GM12878 (cell line): ENCODE measurements at regions of chr12 and their contacts with region 1.

Region 1: GRCh38 chr12:95918194-95918993 is 24.0 kb downstream of the CCDC38 start:
- DNase-seq: no peak
- ATAC-seq: peak; percentile 99
- H3K4me3 ChIP-seq: no peak overlapping the region
- H3K27ac ChIP-seq: no peak overlapping the region
- H3K4me1 ChIP-seq: no peaks in the 10 kb centered on the region
- H3K27me3 ChIP-seq: peaks cover 2 to 3% of the 10 kb centered on the region in 2 experiments; a peak in 3 of 4 replicates
- CTCF ChIP-seq: peak; percentile 77 to 84 (median 80)
- EP300 ChIP-seq: no peak
- POLR2A ChIP-seq: no peak
- RAD21 ChIP-seq: peak; percentile 74

Region 2: GRCh38 chr12:95574799-95575452 is 343.5 kb before region 1 on chr12:
- CTCF ChIA-PET with region 1: no interaction called
- POLR2A ChIA-PET with region 1: no interaction called
- RAD21 ChIA-PET with region 1: no interaction called
- SMC1A ChIA-PET with region 1: no interaction called
- in situ Hi-C with region 1: no loop called
- intact Hi-C with region 1: no loop called
- DNase-seq: no peak
- ATAC-seq: no peak
- H3K4me3 ChIP-seq: no peak overlapping the region
- H3K27ac ChIP-seq: no peak overlapping the region
- H3K4me1 ChIP-seq: peaks cover 9% of the 10 kb centered on the region
- H3K27me3 ChIP-seq: no peaks in the 10 kb centered on the region
- CTCF ChIP-seq: peak; percentile 28 to 43 (median 31); a peak in 4 of 6 replicates
- EP300 ChIP-seq: no peak
- POLR2A ChIP-seq: no peak
- RAD21 ChIP-seq: peak; percentile 32

Region 3: DNA sequence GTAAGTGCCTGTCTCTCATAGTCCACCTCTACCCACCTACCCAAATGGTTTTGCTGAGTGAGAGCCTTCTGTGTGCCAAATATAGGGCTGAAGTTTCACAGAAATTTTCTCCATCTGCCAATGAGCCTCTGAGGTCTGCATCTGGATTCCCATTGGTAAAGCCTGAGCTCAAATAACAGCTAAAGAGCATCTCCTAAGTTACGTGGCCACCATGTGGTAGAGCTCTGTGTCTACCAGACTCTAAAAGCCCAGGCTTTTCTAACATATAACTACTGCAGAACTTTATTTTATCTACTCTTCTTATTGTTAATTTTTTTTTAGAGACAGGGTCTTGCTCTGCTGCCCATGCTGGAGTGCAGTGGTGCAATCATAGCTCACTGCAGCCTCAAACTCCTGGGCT is 40.7 kb after region 1 on chr12:
- CTCF ChIA-PET with region 1: interaction called, 22 read pairs
- POLR2A ChIA-PET with region 1: no interaction called
- RAD21 ChIA-PET with region 1: interaction called, 7 read pairs
- SMC1A ChIA-PET with region 1: interaction called, 5 read pairs
- in situ Hi-C with region 1: no loop called
- intact Hi-C with region 1: no loop called
- DNase-seq: no peak
- ATAC-seq: no peak
- H3K4me3 ChIP-seq: no peak overlapping the region
- H3K27ac ChIP-seq: no peak overlapping the region
- H3K4me1 ChIP-seq: no peaks in the 10 kb centered on the region
- H3K27me3 ChIP-seq: no peaks in the 10 kb centered on the region
- CTCF ChIP-seq: peak in 1 of 3 experiments; percentile 9; a peak in 1 of 6 replicates
- EP300 ChIP-seq: no peak
- POLR2A ChIP-seq: no peak
- RAD21 ChIP-seq: peak; percentile 36

Region 4: GRCh38 chr12:95970905-95971304 is 52.5 kb after region 1 on chr12:
- CTCF ChIA-PET with region 1: interaction called, 15 read pairs
- POLR2A ChIA-PET with region 1: no interaction called
- RAD21 ChIA-PET with region 1: no interaction called
- SMC1A ChIA-PET with region 1: no interaction called
- in situ Hi-C with region 1: no loop called
- intact Hi-C with region 1: no loop called
- DNase-seq: no peak
- ATAC-seq: no peak
- H3K4me3 ChIP-seq: no peak overlapping the region
- H3K27ac ChIP-seq: no peak overlapping the region
- H3K4me1 ChIP-seq: no peaks in the 10 kb centered on the region
- H3K27me3 ChIP-seq: no peaks in the 10 kb centered on the region
- CTCF ChIP-seq: no peak
- EP300 ChIP-seq: no peak
- POLR2A ChIP-seq: no peak
- RAD21 ChIP-seq: no peak

Region 5: GRCh38 chr12:96061864-96062453 is 143.6 kb after region 1 on chr12:
- CTCF ChIA-PET with region 1: interaction called, 6 read pairs
- POLR2A ChIA-PET with region 1: no interaction called
- RAD21 ChIA-PET with region 1: interaction called, 8 read pairs
- SMC1A ChIA-PET with region 1: interaction called, 10 read pairs
- in situ Hi-C with region 1: no loop called
- intact Hi-C with region 1: no loop called
- DNase-seq: peak; percentile 79
- ATAC-seq: peak; percentile 96
- H3K4me3 ChIP-seq: no peak overlapping the region
- H3K27ac ChIP-seq: no peak overlapping the region
- H3K4me1 ChIP-seq: peaks cover 4% of the 10 kb centered on the region; the same call in 1 of the 2 replicates
- H3K27me3 ChIP-seq: no peaks in the 10 kb centered on the region
- CTCF ChIP-seq: peak; percentile 67 to 88 (median 81); a peak in 5 of 6 replicates
- EP300 ChIP-seq: no peak
- POLR2A ChIP-seq: no peak
- RAD21 ChIP-seq: peak; percentile 91

Region 6: DNA sequence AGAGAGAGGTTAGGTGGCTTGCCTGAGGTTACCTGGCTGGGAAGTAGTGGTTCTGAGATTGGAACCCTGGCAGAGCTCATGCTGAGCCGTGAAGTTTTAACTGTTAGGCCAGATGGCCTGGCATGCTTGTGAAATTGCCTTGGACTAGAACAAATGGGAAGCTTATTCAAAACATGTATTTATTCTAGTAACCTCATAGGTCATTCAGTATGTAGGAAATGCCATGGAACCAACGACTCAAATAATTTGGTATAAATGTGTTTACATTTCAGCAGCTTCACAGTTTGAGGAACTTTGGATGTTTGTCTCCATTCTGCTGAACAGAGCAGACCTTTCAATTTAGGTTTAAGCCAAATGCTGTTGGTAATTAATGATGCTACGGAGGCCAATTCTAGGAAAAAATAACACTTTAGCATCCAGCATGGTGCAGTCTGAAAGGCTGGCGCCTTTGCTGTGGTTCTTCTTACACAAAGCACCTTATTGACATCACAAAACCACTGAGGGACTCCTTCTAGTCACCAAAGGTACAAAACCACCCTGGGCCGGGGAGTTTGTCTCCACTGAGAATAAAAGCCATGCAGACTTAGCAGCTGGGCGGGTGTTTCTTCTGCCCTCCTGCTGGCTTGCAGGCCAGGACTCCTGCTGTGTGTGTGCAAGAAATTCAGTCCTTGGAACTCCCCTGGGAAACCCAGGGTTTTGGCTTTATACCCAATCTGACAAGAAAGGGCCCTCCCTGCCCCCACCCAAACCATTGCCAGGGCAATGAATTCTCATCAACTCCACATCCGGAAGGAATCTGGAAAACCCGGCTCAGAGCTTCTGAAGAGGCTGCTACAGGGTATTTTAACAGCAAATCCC is 339.9 kb after region 1 on chr12:
- CTCF ChIA-PET with region 1: no interaction called
- POLR2A ChIA-PET with region 1: no interaction called
- RAD21 ChIA-PET with region 1: no interaction called
- SMC1A ChIA-PET with region 1: no interaction called
- in situ Hi-C with region 1: no loop called
- intact Hi-C with region 1: no loop called
- DNase-seq: no peak
- ATAC-seq: peak; percentile 35
- H3K4me3 ChIP-seq: no peak overlapping the region
- H3K27ac ChIP-seq: no peak overlapping the region
- H3K4me1 ChIP-seq: no peaks in the 10 kb centered on the region
- H3K27me3 ChIP-seq: no peaks in the 10 kb centered on the region
- CTCF ChIP-seq: no peak
- EP300 ChIP-seq: no peak
- POLR2A ChIP-seq: no peak
- RAD21 ChIP-seq: no peak